ENCODE measurements at regions of chr4 and their contacts with region 1.

Region 1: GRCh38 chr4:8403173-8403753 is 37.3 kb downstream of the ACOX3 start:
- DNase-seq: peak; percentile 75
- H3K4me3 ChIP-seq: no peak overlapping the region
- H3K27ac ChIP-seq: peak overlapping the region in 3 of 4 donors; percentile 56 to 63 (median 58)
- H3K4me1 ChIP-seq: peaks cover 0 to 5% (median 0%) of the 10 kb centered on the region in 4 donors
- H3K27me3 ChIP-seq: no peaks in the 10 kb centered on the region
- CTCF ChIP-seq: peak; percentile 82 to 92 (median 86)
- EP300 ChIP-seq: no peak
- POLR2A ChIP-seq: no peak

Region 2: GRCh38 chr4:6608758-6609414 is 1794.4 kb before region 1 on chr4:
- in situ Hi-C with region 1: no loop called
- intact Hi-C with region 1: no loop called
- DNase-seq: no peak
- H3K4me3 ChIP-seq: no peak overlapping the region
- H3K27ac ChIP-seq: no peak overlapping the region
- H3K4me1 ChIP-seq: no peaks in the 10 kb centered on the region
- H3K27me3 ChIP-seq: no peaks in the 10 kb centered on the region
- CTCF ChIP-seq: no peak
- EP300 ChIP-seq: no peak
- POLR2A ChIP-seq: no peak

Region 3: GRCh38 chr4:8158710-8159536 is 244.3 kb before region 1 on chr4 and contains the start of gene ABLIM2:
- in situ Hi-C with region 1: loop called in 1 of 4 experiments (anchors 25 kb)
- intact Hi-C with region 1: no loop called
- DNase-seq: peak; percentile 99
- H3K4me3 ChIP-seq: peak within 1 kb of the TSS; percentile 44 to 91 (median 72)
- H3K27ac ChIP-seq: peak within 1 kb of the TSS; percentile 65 to 84 (median 72)
- H3K4me1 ChIP-seq: peaks cover 12 to 24% (median 21%) of the 10 kb centered on the region in 4 donors
- H3K27me3 ChIP-seq: peaks cover 10% of the 10 kb centered on the region
- CTCF ChIP-seq: no peak
- EP300 ChIP-seq: no peak
- POLR2A ChIP-seq: peak; percentile 71
- total RNA-seq, gene ABLIM2: 3.2 to 58.4 (median 14.2) TPM

Region 4: DNA sequence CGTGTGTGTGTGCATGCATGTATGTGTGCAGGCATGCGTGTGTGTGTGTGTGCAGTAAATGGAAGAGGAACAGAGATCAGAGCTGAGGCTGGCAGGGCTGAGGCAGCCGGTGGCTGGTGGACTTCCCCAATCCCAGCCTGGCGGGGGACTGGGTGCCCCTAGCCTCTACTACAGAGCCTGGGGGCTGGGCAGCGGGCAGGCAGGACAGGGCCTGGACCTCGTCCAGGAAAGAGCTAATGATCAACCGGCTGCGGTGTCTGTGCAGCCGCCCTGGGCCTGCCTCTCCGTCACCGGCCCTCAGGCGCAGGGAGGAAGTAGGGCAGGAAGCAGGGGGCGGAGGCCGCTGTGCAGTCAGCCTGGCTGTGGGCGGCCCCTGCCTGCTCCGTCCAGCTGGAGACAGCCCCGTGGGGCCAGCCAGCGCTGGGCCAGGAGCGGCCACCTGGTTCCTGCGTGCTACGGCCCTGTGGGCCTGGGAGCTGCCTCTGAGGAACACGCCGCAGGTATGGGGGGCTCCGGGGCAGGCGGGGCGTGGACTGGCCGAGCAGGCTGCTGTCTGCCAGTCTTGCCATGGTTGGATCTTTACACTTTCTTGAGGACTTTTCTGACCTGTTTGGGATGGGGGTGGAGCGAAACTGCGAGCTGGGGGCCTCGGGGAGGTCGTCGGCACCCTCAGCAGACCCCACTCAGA is 204.2 kb before region 1 on chr4 and contains the start of gene SH3TC1:
- in situ Hi-C with region 1: no loop called
- intact Hi-C with region 1: no loop called
- DNase-seq: peak; percentile 92
- H3K4me3 ChIP-seq: peak within 1 kb of the TSS; percentile 13 to 52 (median 32)
- H3K27ac ChIP-seq: peak within 1 kb of the TSS; percentile 76 to 87 (median 80)
- H3K4me1 ChIP-seq: peaks cover 6 to 26% (median 24%) of the 10 kb centered on the region in 4 donors
- H3K27me3 ChIP-seq: no peaks in the 10 kb centered on the region
- CTCF ChIP-seq: no peak
- EP300 ChIP-seq: no peak
- POLR2A ChIP-seq: peak; percentile 81
- total RNA-seq, gene SH3TC1: 15.0 to 78.6 (median 41.4) TPM

Region 5: DNA sequence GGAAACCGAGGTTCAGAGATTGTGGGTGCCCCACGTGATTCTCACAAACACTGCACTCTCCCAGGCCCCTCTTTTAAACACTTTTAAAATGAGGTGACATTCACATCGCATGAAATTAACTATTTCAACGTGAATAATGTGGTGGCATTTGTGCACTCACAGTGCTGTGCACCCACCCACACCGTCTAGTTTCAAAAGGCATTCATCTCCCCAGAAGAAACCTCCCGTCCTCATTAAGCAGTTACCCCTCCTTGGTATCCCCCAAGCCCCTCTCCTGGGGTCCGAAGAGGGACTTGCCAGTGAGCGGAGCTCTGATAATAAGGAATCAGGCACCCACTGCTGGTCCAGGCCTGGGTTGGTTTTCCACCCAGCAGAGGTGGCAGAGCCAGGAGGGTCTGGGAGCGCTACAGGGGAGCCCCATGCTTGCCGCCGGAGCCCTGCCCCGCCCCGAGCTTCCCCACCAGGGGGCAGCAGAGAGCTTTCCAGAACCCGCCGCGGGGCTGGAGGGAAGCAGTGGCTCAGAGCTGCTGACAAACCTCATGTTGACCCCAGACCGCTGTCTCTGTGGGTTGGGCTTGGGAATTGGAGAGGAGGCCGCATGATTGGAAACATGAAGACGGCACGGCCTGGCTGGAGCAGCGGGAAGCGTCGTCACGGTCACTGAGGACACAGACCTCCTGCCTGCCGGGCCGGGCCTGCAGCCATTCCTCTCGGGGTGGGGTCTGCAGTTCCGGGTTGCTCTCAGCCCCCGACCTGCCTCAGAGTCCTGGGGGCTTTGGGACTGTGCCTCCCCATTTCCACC is 161.2 kb before region 1 on chr4:
- in situ Hi-C with region 1: loop called (anchors 5 to 25 kb)
- intact Hi-C with region 1: loop called (anchors 2 kb)
- DNase-seq: peak; percentile 83
- H3K4me3 ChIP-seq: no peak overlapping the region
- H3K27ac ChIP-seq: peak overlapping the region in 1 of 4 donors; percentile 33
- H3K4me1 ChIP-seq: peaks cover 0 to 16% (median 10%) of the 10 kb centered on the region in 4 donors
- H3K27me3 ChIP-seq: no peaks in the 10 kb centered on the region
- CTCF ChIP-seq: peak; percentile 89 to 98 (median 98)
- EP300 ChIP-seq: no peak
- POLR2A ChIP-seq: no peak

Measured in transverse colon (tissue), 4 donors.